Activated naive CD4-positive, alpha-beta T cell treated with anti-CD3 and anti-CD28 coated beads for 36 hours (primary cell): ENCODE measurements at regions of chr12 and their contacts with region 1.

Region 1: GRCh38 chr12:53321074-53321814 is at the start of gene AAAS:
- DNase-seq: peak; percentile 98
- H3K4me3 Mint-ChIP-seq: peak within 1 kb of the TSS; percentile 91
- H3K27ac Mint-ChIP-seq: peak within 1 kb of the TSS; percentile 97
- H3K4me1 Mint-ChIP-seq: peaks cover 38% of the 10 kb centered on the region
- H3K27me3 Mint-ChIP-seq: no peaks in the 10 kb centered on the region
- total RNA-seq, gene AAAS: 81.0 to 83.4 TPM

Region 2: DNA sequence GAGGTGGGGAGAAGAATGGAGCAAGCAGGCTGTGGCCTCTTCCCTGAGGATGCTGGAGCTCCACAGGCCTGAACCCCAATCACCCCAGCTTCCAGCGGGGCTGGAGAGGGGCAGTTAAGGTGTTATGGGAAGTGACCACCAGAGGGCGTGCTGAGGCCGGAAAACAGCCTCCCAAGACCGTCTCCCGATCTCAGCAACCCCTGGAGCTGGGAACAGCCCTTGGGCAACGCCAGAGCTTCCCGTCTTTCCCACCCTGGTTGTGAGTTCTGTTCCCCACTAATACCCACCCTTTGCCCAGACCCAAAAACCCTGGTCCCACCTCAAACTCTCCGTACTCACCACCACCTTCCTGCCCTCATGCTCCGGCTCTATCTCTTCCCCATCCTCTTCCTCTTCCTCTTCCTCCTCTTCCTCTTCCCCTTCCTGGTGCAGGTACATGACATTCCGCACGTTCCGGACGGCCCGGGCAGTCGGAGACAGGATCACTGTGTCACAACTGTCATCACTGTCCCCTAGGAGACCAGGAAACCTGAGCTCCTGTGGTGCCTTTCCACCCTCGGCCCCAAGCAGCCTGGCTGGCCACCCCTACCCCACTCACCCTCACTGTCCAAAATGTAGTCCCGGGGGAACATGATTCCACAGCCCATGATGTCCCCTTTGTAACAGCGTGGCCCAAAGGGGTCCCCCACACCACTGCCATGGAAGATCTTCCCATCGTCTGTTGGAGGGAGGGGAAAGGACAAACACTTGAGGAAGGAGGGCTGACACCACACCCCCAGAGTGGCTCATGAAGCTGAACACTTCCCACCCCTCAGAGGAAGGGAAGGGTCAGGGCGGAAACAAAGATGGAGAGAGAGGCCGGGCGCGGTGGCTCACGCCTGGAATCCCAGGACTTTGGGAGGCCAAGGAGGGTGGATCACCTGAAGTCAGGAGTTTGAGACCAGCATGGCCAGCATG is 255.0 kb before region 1 on chr12:
- CTCF ChIA-PET with region 1: no interaction called
- intact Hi-C with region 1: no loop called
- DNase-seq: peak; percentile 78
- H3K4me3 Mint-ChIP-seq: no peak overlapping the region
- H3K27ac Mint-ChIP-seq: no peak overlapping the region
- H3K4me1 Mint-ChIP-seq: peaks cover 8% of the 10 kb centered on the region
- H3K27me3 Mint-ChIP-seq: no peaks in the 10 kb centered on the region

Region 3: DNA sequence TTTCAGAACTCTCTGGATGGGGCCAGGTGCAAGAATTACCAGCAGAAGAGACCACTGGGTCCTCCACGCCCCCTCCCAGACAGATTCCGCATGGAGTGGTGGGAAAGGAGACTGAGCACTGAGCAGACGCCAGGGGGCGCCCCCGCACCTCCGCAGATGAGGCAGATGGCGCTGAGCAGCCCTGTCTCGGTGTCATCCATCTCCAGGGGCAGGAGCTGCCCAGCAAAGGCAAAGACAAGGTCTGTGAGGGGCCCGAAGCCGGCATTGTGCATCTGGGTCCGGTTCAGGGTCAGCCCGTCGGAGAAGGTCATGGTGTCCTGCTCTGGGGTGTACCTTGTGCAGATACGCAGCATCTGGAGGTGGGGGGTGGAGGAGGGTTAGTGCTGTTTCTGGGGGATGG is 107.9 kb before region 1 on chr12:
- CTCF ChIA-PET with region 1: interaction called, 175 read pairs
- intact Hi-C with region 1: loop called (anchors 1 kb)
- DNase-seq: peak; percentile 89
- H3K4me3 Mint-ChIP-seq: no peak overlapping the region
- H3K27ac Mint-ChIP-seq: peak overlapping the region; percentile 33
- H3K4me1 Mint-ChIP-seq: peaks cover 42% of the 10 kb centered on the region
- H3K27me3 Mint-ChIP-seq: no peaks in the 10 kb centered on the region

Region 4: GRCh38 chr12:53295070-53295890 is 26.0 kb before region 1 on chr12 and contains the start of gene PFDN5:
- CTCF ChIA-PET with region 1: interaction called, 39 read pairs
- intact Hi-C with region 1: loop called (anchors 1 kb)
- DNase-seq: peak; percentile 94
- H3K4me3 Mint-ChIP-seq: peak within 1 kb of the TSS; percentile 98
- H3K27ac Mint-ChIP-seq: peak within 1 kb of the TSS; percentile 95
- H3K4me1 Mint-ChIP-seq: peaks cover 53% of the 10 kb centered on the region
- H3K27me3 Mint-ChIP-seq: no peaks in the 10 kb centered on the region
- total RNA-seq, gene PFDN5: 376 to 383 TPM

Region 5: GRCh38 chr12:53352331-53353256 is 31.4 kb after region 1 on chr12:
- CTCF ChIA-PET with region 1: interaction called, 196 read pairs
- intact Hi-C with region 1: no loop called
- DNase-seq: peak; percentile 94
- H3K4me3 Mint-ChIP-seq: no peak overlapping the region
- H3K27ac Mint-ChIP-seq: no peak overlapping the region
- H3K4me1 Mint-ChIP-seq: peaks cover 6% of the 10 kb centered on the region
- H3K27me3 Mint-ChIP-seq: no peaks in the 10 kb centered on the region

Region 6: GRCh38 chr12:53451661-53452158 is 130.5 kb after region 1 on chr12 and contains the start of gene PCBP2:
- CTCF ChIA-PET with region 1: interaction called, 4 read pairs
- intact Hi-C with region 1: loop called (anchors 1 kb)
- DNase-seq: peak; percentile 99
- H3K4me3 Mint-ChIP-seq: peak within 1 kb of the TSS; percentile 99
- H3K27ac Mint-ChIP-seq: peak within 1 kb of the TSS; percentile 99
- H3K4me1 Mint-ChIP-seq: peaks cover 36% of the 10 kb centered on the region
- H3K27me3 Mint-ChIP-seq: no peaks in the 10 kb centered on the region
- total RNA-seq, gene PCBP2: 1,085 to 1,132 TPM

Region 7: GRCh38 chr12:53462935-53463334 is 141.7 kb after region 1 on chr12:
- CTCF ChIA-PET with region 1: no interaction called
- intact Hi-C with region 1: no loop called
- DNase-seq: no peak
- H3K4me3 Mint-ChIP-seq: no peak overlapping the region
- H3K27ac Mint-ChIP-seq: peak overlapping the region; percentile 43
- H3K4me1 Mint-ChIP-seq: peaks cover 45% of the 10 kb centered on the region
- H3K27me3 Mint-ChIP-seq: no peaks in the 10 kb centered on the region

Region 8: GRCh38 chr12:53675651-53676453 is 354.6 kb after region 1 on chr12 and contains the start of gene ATP5MC2:
- CTCF ChIA-PET with region 1: no interaction called
- intact Hi-C with region 1: loop called (anchors 1 kb)
- DNase-seq: peak; percentile 98
- H3K4me3 Mint-ChIP-seq: peak within 1 kb of the TSS; percentile 95
- H3K27ac Mint-ChIP-seq: peak within 1 kb of the TSS; percentile 91
- H3K4me1 Mint-ChIP-seq: peaks cover 32% of the 10 kb centered on the region
- H3K27me3 Mint-ChIP-seq: peaks cover 13% of the 10 kb centered on the region
- total RNA-seq, gene ATP5MC2: 443 to 466 TPM